HCT116 (cell line): ENCODE measurements at regions of chr22 and their contacts with region 1.

Region 1: DNA sequence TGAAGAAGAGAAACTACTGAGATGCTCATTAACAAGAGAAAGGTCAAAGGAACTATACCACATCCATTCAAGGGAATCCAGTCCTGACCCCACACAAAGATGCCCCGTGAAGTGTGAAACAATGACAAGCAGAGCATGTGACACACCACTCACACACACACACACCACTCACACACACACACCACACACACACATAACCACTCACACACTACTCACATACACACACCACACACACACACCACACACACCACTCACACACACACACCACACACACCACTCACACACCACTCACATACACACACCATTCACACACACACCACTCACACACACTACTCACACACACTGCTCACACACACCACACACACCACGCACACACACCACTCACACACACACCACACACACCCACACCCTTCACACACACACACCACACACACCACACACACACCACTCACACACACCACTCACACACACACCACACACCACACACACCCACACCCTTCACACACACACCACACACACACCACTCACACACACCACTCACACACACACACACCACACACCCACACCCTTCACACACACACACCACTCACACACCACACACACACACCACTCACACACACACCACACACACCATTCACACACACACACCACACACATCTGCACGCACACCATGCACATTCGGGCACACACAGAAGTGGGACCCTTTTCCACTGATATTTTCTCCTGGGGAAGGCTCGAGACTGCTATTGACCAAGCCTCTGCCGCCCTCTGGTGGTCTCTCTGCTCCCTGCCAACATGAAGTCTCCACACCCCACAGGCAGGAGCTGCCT is 32.0 kb upstream of the COMT start:
- DNase-seq: peak; percentile 51
- ATAC-seq: peak; percentile 98
- H3K4me3 ChIP-seq: no peak overlapping the region
- H3K27ac ChIP-seq: peak overlapping the region; percentile 33; the same call in 1 of the 2 replicates
- H3K4me1 ChIP-seq: no peaks in the 10 kb centered on the region
- H3K27me3 ChIP-seq: no peaks in the 10 kb centered on the region
- CTCF ChIP-seq: peak; percentile 88 to 94 (median 91)
- POLR2A ChIP-seq: no peak
- RAD21 ChIP-seq: peak; percentile 95

Region 2: DNA sequence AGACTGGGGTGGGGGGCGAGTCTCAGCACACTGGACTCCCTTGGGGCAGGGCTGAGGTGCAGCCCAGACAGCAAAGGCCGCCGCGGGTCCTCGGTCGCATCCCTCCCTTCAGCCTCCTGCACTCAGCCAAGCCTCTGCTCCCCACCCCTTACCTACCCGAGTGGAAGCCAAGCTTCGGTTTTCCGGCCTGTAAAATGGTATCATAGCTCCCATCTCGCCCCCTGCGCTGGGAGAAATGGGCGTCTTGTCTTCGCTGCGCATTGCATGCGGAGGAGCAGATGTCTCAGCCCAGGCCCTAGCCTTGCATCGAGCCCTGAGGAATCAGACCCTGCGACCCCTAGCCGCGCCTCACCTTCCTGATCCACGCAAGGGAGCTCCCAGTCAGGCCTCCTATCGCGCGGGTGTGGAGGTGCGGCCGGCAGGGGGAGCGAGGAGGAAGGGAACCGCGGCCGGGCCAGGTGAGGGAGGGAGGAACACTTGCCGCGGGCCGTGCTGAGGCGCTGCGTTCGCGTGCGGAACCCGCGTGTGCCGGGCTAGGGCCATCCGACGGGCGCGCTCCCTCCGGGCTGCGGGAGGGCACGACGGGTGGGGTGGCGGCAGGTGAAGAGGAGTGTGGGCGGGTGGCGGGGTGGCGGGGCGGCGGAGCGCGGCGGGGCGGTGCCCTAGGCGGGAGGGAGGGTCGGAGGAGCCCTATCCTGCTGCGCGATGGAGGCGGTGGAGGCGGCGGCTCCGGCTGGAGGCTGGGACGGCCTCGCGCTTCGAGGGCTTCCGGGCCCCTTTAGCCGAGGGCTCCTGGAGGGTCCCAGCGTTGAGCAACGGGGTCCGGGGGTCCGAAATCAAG is 153.1 kb before region 1 on chr22:
- CTCF ChIA-PET with region 1: interaction called, 28 read pairs
- POLR2A ChIA-PET with region 1: no interaction called
- RAD21 ChIA-PET with region 1: interaction called, 5 to 14 read pairs
- intact Hi-C with region 1: loop called (anchors 1 kb)
- DNase-seq: peak; percentile 34
- ATAC-seq: peak; percentile 88
- H3K4me3 ChIP-seq: peak overlapping the region; percentile 32 to 53
- H3K27ac ChIP-seq: peak overlapping the region; percentile 14; the same call in 1 of the 2 replicates
- H3K4me1 ChIP-seq: peaks cover 4 to 16% of the 10 kb centered on the region in 2 experiments; a peak in 3 of 4 replicates
- H3K27me3 ChIP-seq: no peaks in the 10 kb centered on the region
- CTCF ChIP-seq: peak; percentile 68 to 78 (median 74)
- POLR2A ChIP-seq: no peak
- RAD21 ChIP-seq: peak; percentile 83

Region 3: DNA sequence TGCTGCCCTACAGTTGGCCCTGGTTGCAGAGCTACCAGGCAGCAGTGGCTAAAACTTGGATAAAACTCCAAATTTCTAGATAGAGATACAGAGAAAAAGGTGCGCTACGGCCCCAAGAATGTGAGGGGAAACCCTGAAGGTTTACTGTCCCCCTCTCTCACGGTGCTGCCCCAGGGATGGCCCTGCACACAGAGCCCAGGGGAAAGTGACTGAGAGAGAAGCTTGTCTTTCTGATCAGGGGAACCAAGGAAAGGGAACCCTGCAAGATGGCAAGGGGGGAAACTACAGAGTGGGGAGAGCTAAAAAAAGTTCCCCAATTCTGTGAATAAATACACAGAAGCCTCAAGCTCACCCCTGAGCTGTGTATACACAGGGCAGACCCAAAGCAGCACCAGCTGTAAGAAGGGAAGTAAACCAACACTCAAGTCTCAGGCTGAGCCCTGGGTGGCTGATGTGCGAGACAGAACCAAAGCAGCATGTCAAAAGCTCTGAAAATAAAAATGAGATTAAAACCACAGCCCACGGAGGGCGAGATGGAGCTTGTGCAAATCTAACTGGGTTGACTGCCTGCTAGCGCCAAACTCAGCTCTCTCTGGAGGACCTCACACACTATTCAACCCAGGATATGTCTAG is 77.0 kb before region 1 on chr22:
- CTCF ChIA-PET with region 1: no interaction called
- POLR2A ChIA-PET with region 1: no interaction called
- RAD21 ChIA-PET with region 1: no interaction called
- intact Hi-C with region 1: no loop called
- DNase-seq: no peak
- ATAC-seq: no peak
- H3K4me3 ChIP-seq: no peak overlapping the region
- H3K27ac ChIP-seq: no peak overlapping the region
- H3K4me1 ChIP-seq: no peaks in the 10 kb centered on the region
- H3K27me3 ChIP-seq: no peaks in the 10 kb centered on the region
- CTCF ChIP-seq: no peak
- POLR2A ChIP-seq: no peak
- RAD21 ChIP-seq: no peak